Dendritic cell treated with granulocyte-macrophage colony-stimulating factor and Interleukin-4, amounts not matched to agents 40 ng/mL and 50 ng/mL, for 4 days (primary cell): ENCODE measurements at regions of chr16 and their contacts with region 1.

Region 1: GRCh38 chr16:49350265-49351095 is 23.1 kb upstream of the C16orf78 start:
- H3K4me3 Mint-ChIP-seq: no peak overlapping the region
- H3K27ac Mint-ChIP-seq: no peak overlapping the region
- H3K4me1 Mint-ChIP-seq: no peaks in the 10 kb centered on the region
- H3K27me3 Mint-ChIP-seq: peaks cover 14% of the 10 kb centered on the region

Region 2: GRCh38 chr16:48687421-48688038 is 663.0 kb before region 1 on chr16:
- intact Hi-C with region 1: loop called (anchors 1 kb)
- H3K4me3 Mint-ChIP-seq: no peak overlapping the region
- H3K27ac Mint-ChIP-seq: no peak overlapping the region
- H3K4me1 Mint-ChIP-seq: peaks cover 12% of the 10 kb centered on the region
- H3K27me3 Mint-ChIP-seq: peaks cover 7% of the 10 kb centered on the region